ENCODE measurements at regions of chr18 and their contacts with region 1.

Region 1: DNA sequence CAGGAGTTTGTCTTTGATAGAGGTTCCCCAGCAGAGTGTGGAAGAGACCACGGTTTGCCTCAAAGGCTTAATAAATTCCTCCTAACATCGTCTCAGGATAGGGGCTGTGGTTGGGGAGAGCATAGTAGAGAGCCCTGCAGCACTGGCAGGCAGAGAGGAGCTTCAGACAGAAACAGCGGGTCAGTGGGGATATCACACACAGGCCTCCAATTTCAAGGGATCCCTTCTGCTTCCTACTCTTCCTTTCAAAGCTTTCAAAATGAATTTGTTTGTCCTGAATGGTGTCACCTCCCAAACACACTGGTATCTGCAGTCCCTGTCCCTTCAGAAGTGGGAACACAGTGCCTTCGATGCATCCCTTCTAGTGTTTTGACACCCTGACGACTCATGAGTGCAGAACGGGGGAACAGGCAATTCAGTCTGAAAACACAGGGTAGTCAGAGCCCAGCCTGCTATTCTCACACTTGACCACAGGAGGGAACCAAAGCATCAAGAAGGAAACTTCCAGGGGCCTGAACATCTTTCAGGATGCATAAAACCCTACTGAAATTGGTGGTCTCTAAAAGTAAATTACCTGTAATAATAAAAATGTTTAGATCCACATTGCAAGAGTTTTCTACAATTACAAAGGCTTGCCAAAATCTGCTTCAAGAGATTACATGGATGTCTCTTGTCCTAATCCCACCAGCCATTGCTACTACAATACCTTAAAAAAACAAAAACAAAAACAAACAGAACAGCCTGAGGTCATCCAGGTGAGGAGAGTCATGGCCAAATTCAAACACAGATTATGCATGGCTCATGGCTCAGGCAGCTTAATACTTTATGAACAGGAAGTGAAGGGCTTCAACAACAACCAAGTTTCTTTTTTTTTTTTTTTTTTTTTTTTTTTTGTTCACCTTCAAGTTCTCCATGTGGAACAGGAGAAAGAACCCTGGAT is 49.8 kb downstream of the SLC14A2 start:
- DNase-seq: no peak
- H3K4me3 ChIP-seq: no peak overlapping the region
- H3K27me3 ChIP-seq: no peaks in the 10 kb centered on the region
- CTCF ChIP-seq: peak; percentile 94

Region 2: GRCh38 chr18:45626330-45627203 is 38.5 kb before region 1 on chr18:
- CTCF ChIA-PET with region 1: interaction called, 91 read pairs
- POLR2A ChIA-PET with region 1: no interaction called
- DNase-seq: peak; percentile 54
- H3K4me3 ChIP-seq: no peak overlapping the region
- H3K27me3 ChIP-seq: peaks cover 5% of the 10 kb centered on the region
- CTCF ChIP-seq: no peak

Region 3: DNA sequence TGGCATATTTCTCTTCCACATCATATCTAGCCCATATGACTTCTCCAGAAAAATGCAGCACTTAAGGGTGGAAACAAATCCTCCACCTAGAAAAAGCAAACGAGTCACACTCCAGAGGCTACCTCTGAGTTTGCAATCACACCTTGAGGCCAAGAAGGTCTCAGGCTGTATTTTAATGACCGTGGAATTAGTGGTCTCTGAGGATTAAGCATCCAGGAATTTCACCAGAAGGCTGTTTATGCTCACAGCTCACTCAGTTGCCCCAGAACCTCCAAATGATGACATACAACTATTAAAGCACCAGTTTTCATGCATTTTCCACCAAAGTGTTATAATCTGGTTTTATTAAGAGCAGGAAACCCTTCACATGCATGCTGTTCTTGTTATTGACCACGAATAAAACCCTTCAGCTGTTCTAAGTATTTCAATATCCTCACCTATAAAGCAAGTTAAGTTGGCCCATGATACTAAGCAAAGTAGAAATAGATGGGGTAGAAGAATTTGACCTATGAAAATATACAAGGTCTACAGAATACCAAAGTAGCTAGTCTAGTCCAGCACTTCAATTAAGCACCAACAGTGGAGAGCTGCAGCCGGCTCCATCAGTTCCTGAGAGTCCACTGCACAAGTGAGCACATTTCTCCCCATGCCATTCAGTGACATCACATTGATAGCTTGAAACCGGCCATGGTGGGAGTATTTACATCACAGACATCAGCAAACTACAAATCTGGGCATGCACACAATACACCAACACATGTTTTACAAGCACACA is 19.4 kb after region 1 on chr18:
- CTCF ChIA-PET with region 1: interaction called, 14 read pairs
- POLR2A ChIA-PET with region 1: no interaction called
- DNase-seq: peak; percentile 92
- H3K4me3 ChIP-seq: no peak overlapping the region
- H3K27me3 ChIP-seq: no peaks in the 10 kb centered on the region
- CTCF ChIP-seq: no peak

Region 4: GRCh38 chr18:45839414-45840395 is 174.6 kb after region 1 on chr18:
- CTCF ChIA-PET with region 1: interaction called, 18 read pairs
- POLR2A ChIA-PET with region 1: no interaction called
- DNase-seq: no peak
- H3K4me3 ChIP-seq: no peak overlapping the region
- H3K27me3 ChIP-seq: peaks cover 4% of the 10 kb centered on the region
- CTCF ChIP-seq: peak; percentile 83

Region 5: GRCh38 chr18:45910405-45911023 is 245.4 kb after region 1 on chr18:
- CTCF ChIA-PET with region 1: interaction called, 11 read pairs
- POLR2A ChIA-PET with region 1: no interaction called
- DNase-seq: no peak
- H3K4me3 ChIP-seq: no peak overlapping the region
- H3K27me3 ChIP-seq: no peaks in the 10 kb centered on the region
- CTCF ChIP-seq: peak; percentile 88

Region 6: DNA sequence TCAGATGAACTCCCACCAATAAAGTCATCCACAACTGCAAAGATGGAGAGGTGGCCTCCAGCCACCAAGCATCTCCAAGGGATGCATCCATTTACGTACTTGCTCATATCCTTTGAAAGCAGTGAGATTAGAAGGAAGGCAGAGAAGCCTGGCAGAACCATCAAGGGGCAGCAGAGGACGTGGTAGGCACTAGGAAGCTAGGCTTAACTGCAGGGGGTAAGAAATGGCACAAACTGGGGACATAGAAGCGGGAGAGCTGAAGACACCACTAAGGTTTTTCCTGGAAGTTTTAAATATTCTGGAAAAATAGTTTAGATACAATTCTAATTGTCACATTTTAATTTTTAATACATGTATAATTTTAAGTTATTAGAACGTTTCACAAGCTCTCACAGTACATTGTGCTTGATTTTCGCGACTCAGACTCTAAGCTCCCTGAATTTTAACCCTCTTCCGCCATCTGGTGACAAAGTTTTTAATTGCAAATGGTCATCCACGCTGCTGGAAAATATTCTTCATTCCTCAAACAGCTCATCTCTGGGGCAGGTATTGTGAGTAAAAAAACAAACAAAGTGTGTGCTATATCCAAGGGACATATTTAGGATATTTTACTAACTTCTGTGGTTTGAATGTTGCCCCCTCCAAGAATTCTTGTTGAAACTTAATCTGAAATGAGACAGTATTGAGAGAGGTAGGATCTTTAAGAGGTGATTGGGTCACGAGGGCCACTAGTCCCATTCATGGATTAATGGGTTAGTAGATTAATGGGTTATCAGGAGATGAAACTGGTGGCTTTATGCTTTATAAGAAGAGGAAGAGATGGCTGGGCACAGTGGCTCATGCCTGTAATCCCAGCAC is 408.6 kb after region 1 on chr18:
- CTCF ChIA-PET with region 1: interaction called, 28 read pairs
- POLR2A ChIA-PET with region 1: no interaction called
- DNase-seq: no peak
- H3K4me3 ChIP-seq: no peak overlapping the region
- H3K27me3 ChIP-seq: no peaks in the 10 kb centered on the region
- CTCF ChIP-seq: peak; percentile 54

Region 7: GRCh38 chr18:46386788-46387187 is 721.7 kb after region 1 on chr18:
- CTCF ChIA-PET with region 1: no interaction called
- POLR2A ChIA-PET with region 1: no interaction called
- DNase-seq: no peak
- H3K4me3 ChIP-seq: no peak overlapping the region
- H3K27me3 ChIP-seq: peaks cover 4% of the 10 kb centered on the region
- CTCF ChIP-seq: no peak